Activated CD4-positive, alpha-beta memory T cell treated with anti-CD3 and anti-CD28 coated beads for 36 hours (primary cell): ENCODE measurements at regions of chr6 and their contacts with region 1.

Region 1: GRCh38 chr6:29737707-29738630 is 14.7 kb downstream of the HLA-F start:
- DNase-seq: peak; percentile 78
- H3K4me3 Mint-ChIP-seq: no peak overlapping the region
- H3K27ac Mint-ChIP-seq: no peak overlapping the region
- H3K4me1 Mint-ChIP-seq: peaks cover 6% of the 10 kb centered on the region
- H3K27me3 Mint-ChIP-seq: no peaks in the 10 kb centered on the region

Region 2: GRCh38 chr6:29617782-29618557 is 120.0 kb before region 1 on chr6:
- CTCF ChIA-PET with region 1: no interaction called
- POLR2A ChIA-PET with region 1: no interaction called
- intact Hi-C with region 1: no loop called
- DNase-seq: peak; percentile 18
- H3K4me3 Mint-ChIP-seq: no peak overlapping the region
- H3K27ac Mint-ChIP-seq: no peak overlapping the region
- H3K4me1 Mint-ChIP-seq: no peaks in the 10 kb centered on the region
- H3K27me3 Mint-ChIP-seq: no peaks in the 10 kb centered on the region

Region 3: DNA sequence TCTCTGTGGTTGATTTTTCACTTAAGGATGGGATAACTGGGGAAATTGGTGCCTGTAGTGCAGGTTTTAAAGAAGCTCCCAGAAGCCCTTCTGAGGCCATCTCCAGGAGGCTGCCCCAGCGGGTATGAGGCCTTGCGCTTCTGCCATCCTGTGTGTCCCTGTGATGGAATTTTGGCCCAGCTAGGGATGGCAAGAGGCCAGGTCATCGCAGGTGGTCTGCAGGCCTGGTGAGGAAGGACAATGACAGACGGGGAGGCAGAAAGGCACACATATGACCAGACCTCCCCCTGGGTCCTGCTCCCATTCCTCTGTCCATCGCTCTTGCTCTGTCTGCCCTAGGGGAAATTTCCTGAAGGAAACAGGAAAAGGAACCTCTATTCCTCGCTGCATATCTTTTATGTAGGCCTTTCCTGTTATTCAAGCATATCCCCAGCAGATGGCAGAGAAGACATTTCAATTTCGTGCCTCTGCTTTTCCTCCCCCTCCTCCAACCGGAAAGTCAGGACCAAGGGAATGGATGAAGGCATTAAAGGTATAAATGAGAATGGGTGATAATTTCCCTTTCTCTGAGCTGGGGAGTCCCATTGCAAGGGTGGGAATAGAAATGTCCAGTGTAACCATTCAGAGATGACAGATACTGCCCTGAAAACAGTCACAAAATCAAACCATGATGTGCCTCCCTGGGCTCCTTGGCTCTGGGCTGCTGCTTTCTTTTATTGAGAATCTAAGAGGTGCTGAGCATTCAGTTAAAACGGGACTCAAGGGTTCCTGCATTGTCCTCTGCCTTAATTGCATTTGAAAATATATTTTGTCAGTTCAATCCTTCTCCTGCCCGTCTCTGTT is 32.4 kb before region 1 on chr6:
- CTCF ChIA-PET with region 1: interaction called, 23 read pairs
- POLR2A ChIA-PET with region 1: no interaction called
- intact Hi-C with region 1: no loop called
- DNase-seq: no peak
- H3K4me3 Mint-ChIP-seq: peak overlapping the region; percentile 6
- H3K27ac Mint-ChIP-seq: no peak overlapping the region
- H3K4me1 Mint-ChIP-seq: peaks cover 50% of the 10 kb centered on the region
- H3K27me3 Mint-ChIP-seq: peaks cover 13% of the 10 kb centered on the region

Region 4: DNA sequence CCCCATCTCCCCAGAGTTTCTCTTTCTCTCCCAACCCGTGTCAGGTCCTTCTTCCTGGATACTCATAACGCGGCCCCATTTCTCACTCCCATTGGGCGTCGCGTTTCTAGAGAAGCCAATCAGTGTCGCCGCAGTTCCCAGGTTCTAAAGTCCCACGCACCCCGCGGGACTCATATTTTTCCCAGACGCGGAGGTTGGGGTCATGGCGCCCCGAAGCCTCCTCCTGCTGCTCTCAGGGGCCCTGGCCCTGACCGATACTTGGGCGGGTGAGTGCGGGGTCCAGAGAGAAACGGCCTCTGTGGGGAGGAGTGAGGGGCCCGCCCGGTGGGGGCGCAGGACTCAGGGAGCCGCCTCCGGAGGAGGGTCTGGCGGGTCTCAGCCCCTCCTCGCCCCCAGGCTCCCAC is 14.7 kb before region 1 on chr6 and contains the start of gene HLA-F:
- CTCF ChIA-PET with region 1: interaction called, 17 read pairs
- POLR2A ChIA-PET with region 1: no interaction called
- intact Hi-C with region 1: no loop called
- DNase-seq: peak; percentile 90
- H3K4me3 Mint-ChIP-seq: peak within 1 kb of the TSS; percentile 86
- H3K27ac Mint-ChIP-seq: peak within 1 kb of the TSS; percentile 92
- H3K4me1 Mint-ChIP-seq: peaks cover 58% of the 10 kb centered on the region
- H3K27me3 Mint-ChIP-seq: no peaks in the 10 kb centered on the region
- total RNA-seq, gene HLA-F: 256 to 270 TPM

Region 5: GRCh38 chr6:29763491-29764289 is 25.7 kb after region 1 on chr6:
- CTCF ChIA-PET with region 1: interaction called, 12 read pairs
- POLR2A ChIA-PET with region 1: no interaction called
- intact Hi-C with region 1: no loop called
- DNase-seq: peak; percentile 55
- H3K4me3 Mint-ChIP-seq: no peak overlapping the region
- H3K27ac Mint-ChIP-seq: peak overlapping the region; percentile 43
- H3K4me1 Mint-ChIP-seq: peaks cover 10% of the 10 kb centered on the region
- H3K27me3 Mint-ChIP-seq: no peaks in the 10 kb centered on the region

Region 6: GRCh38 chr6:29792123-29793035 is 54.4 kb after region 1 on chr6:
- CTCF ChIA-PET with region 1: interaction called, 15 read pairs
- POLR2A ChIA-PET with region 1: no interaction called
- intact Hi-C with region 1: no loop called
- DNase-seq: peak; percentile 84
- H3K4me3 Mint-ChIP-seq: peak overlapping the region; percentile 81
- H3K27ac Mint-ChIP-seq: no peak overlapping the region
- H3K4me1 Mint-ChIP-seq: peaks cover 18% of the 10 kb centered on the region
- H3K27me3 Mint-ChIP-seq: peaks cover 22% of the 10 kb centered on the region

Region 7: DNA sequence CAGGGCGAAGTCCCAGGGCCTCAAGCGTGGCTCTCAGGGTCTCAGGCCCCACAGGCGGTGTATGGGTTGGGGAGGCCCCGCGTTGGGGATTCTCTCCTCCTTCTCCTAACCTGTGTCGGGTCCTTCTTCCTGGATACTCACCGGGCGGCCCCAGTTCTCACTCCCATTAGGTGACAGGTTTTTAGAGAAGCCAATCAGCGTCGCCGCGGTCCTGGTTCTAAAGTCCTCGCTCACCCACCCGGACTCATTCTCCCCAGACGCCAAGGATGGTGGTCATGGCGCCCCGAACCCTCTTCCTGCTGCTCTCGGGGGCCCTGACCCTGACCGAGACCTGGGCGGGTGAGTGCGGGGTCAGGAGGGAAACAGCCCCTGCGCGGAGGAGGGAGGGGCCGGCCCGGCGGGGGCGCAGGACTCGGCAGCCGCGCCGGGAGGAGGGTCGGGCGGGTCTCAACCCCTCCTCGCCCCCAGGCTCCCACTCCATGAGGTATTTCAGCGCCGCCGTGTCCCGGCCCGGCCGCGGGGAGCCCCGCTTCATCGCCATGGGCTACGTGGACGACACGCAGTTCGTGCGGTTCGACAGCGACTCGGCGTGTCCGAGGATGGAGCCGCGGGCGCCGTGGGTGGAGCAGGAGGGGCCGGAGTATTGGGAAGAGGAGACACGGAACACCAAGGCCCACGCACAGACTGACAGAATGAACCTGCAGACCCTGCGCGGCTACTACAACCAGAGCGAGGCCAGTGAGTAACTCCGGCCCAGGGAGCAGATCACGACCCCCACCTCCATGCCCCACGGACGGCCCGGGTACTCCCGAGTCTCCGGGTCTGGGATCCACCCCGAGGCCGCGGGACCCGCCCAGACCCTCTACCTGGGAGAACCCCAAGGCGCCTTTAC is 89.9 kb after region 1 on chr6 and contains the start of gene HLA-G:
- CTCF ChIA-PET with region 1: interaction called, 135 read pairs
- POLR2A ChIA-PET with region 1: no interaction called
- intact Hi-C with region 1: no loop called
- DNase-seq: no peak
- H3K4me3 Mint-ChIP-seq: peak within 1 kb of the TSS; percentile 53
- H3K27ac Mint-ChIP-seq: no peak within 1 kb of the TSS
- H3K4me1 Mint-ChIP-seq: peaks cover 9% of the 10 kb centered on the region
- H3K27me3 Mint-ChIP-seq: peaks cover 43% of the 10 kb centered on the region
- total RNA-seq, gene HLA-G: 0.19 to 0.38 TPM

Region 8: DNA sequence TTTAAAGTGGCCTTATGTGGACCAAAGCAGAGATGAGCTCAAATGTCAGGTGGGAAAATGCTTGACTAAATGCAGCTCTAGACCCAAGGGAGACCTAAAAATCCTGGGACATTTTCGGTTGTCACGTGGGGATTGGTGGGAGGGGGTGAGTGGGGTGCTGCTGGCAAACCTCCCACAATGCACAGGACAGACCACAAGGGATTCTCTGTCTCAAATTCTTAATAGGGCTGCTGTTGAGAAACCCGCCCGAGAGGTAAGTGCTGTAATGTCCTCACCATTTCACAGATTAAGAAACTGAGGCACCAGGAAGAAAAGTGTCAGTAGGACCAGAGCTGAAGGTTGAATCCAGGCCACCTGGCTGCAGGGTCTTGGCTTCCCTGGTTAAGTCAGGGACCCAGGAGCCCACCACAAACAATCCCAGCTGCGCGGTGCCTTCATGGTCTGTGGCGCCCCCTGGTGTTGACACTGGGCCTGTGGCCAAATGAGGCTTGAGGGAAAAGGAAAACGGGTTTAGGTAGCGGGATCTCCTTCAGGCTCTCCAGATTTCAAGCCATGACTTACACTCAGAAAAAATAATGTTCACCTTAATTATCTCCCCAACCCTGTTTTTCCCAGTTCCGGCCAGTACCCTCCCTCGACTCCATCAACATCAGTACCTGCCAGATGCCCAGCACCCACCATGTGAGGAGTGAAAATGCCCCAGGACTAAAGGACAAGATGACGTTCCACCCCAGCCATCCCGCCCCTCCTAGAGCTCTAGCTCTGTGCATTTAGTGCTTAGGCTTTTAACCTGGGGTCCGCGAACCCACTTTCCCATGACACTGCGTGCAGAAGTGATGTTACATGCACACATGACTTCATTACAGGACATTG is 96.8 kb after region 1 on chr6:
- CTCF ChIA-PET with region 1: interaction called, 135 read pairs
- POLR2A ChIA-PET with region 1: no interaction called
- intact Hi-C with region 1: loop called (anchors 2 kb)
- DNase-seq: peak; percentile 65
- H3K4me3 Mint-ChIP-seq: no peak overlapping the region
- H3K27ac Mint-ChIP-seq: no peak overlapping the region
- H3K4me1 Mint-ChIP-seq: no peaks in the 10 kb centered on the region
- H3K27me3 Mint-ChIP-seq: peaks cover 38% of the 10 kb centered on the region